ENCODE measurements at regions of chr6 and their contacts with region 1.

Region 1: GRCh38 chr6:131135244-131136020 is at the start of gene AKAP7:
- DNase-seq: peak; percentile 55 to 88 (median 69)
- H3K4me3 ChIP-seq: peak within 1 kb of the TSS; percentile 57 to 90 (median 79)
- H3K27ac ChIP-seq: peak within 1 kb of the TSS; percentile 87 to 99 (median 97)
- H3K27me3 ChIP-seq: no peaks in the 10 kb centered on the region
- CTCF ChIP-seq: peak in 17 of 56 donors; percentile 4 to 44 (median 12)
- total RNA-seq, gene AKAP7: 19.0 to 54.4 (median 33.0) TPM

Region 2: DNA sequence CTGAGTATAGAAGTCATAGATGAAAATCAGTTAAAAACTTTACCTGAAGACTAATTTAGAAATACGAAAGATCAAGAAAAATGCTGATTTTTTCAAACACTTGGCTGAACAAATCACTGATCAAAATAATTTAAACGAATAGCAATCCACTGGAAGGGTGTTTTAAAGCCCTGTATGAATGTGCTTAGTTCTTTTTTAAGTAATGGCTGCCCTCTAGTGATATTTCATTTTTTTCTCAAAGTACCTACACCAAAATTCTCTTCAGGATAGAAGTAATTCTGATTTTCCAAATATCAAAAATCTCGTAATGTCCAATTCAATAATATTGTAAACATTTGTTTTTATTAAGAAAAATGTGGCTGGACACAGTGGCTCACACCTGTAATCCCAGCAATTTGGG is 32.3 kb after region 1 on chr6:
- intact Hi-C with region 1: loop called in 1 of 2 experiments (anchors 2 kb)
- DNase-seq: no peak
- H3K4me3 ChIP-seq: no peak overlapping the region
- H3K27ac ChIP-seq: no peak overlapping the region
- H3K27me3 ChIP-seq: no peaks in the 10 kb centered on the region
- CTCF ChIP-seq: peak in 51 of 56 donors; percentile 22 to 76 (median 52)

Region 3: GRCh38 chr6:131317516-131317915 is 182.1 kb after region 1 on chr6:
- intact Hi-C with region 1: no loop called
- DNase-seq: no peak
- H3K4me3 ChIP-seq: no peak overlapping the region
- H3K27ac ChIP-seq: no peak overlapping the region
- H3K27me3 ChIP-seq: no peaks in the 10 kb centered on the region
- CTCF ChIP-seq: no peak

Measured in dorsolateral prefrontal cortex (tissue), 120 donors.